ENCODE measurements at regions of chr5 and their contacts with region 1.

Region 1: GRCh38 chr5:54601411-54602230 is 84.1 kb downstream of the SNX18 start:
- H3K4me3 Mint-ChIP-seq: peak overlapping the region; percentile 48
- H3K27ac Mint-ChIP-seq: peak overlapping the region; percentile 85
- H3K4me1 Mint-ChIP-seq: peaks cover 34% of the 10 kb centered on the region
- H3K27me3 Mint-ChIP-seq: no peaks in the 10 kb centered on the region

Region 2: DNA sequence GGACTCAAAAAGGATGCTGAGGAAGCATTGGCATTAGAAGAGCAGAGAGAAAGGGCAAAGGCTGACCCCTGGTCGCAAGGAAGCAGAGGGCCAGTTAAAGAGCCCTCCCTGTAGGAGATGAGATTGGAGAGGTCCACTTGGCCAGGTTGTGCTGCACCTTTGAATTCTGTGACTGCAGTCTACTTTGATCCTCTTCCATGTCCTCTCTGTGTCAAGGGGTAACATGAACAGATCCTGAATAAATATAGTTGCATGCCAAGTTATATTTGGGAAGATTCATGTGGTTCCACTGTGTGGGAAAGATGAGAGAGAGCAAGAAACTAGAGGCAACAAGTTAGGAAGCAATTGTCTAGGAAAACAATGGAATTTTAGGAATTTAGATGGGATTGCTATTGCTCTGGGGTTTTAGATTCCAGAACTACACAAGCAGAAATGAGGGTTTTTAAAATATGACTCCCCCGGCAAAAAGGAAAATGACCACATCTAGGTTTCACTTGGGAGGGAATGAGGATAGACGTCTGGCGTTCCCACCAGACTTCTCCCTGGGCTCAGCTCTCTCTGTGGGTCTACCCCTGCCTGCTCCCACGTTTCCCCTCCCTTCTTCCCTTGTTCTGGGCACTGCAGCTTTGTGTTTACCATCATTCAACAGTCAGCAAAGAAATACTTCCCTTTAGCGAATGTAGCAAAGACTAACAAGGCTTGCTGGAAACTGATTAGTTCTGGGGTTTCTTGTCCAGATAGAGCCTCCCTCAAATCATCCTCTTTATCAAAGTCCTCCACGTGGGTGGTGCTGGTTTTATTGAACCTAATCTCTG is 20.4 kb before region 1 on chr5:
- intact Hi-C with region 1: loop called (anchors 1 kb)
- H3K4me3 Mint-ChIP-seq: no peak overlapping the region
- H3K27ac Mint-ChIP-seq: peak overlapping the region; percentile 38
- H3K4me1 Mint-ChIP-seq: peaks cover 70% of the 10 kb centered on the region
- H3K27me3 Mint-ChIP-seq: no peaks in the 10 kb centered on the region